ENCODE measurements at regions of chr5 and their contacts with region 1.

Region 1: DNA sequence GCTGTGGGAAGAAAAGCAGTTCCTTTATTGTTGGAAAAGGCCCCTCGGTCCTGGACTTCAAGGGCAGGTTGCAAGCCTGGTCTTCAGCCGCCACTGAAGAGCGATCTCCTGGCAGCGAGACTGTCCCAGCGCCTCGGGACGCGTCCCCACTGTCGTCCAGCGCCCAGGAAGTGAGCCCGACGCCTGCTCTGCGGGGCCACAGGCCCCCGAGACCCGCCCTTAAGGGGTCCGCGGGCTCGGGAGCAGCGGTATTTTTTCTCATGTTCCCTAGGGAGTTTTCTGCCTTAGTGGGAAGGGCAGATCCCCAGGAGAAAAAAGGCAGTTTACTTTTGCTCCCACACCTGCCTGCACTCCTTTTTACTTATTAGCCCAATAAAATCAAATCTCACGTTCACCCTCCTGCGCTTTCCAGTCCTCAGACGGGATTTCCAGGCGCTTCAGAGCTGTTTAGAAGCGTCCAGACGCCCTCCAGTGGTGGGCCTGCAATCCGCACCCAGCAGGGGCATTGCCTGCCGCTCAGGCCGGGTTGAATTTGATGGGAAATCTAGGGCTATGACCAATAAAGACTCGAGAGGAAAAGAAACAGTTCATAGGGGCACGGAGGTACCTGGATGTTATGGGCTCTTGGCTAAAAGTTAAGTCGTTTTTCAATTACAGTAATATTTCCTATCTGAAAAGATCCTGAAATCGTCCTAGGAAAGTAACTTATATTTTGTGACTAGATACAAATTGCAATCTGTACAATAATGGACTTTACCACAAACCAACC is 2.8 kb upstream of the EFNA5 start:
- DNase-seq: peak; percentile 93
- H3K4me3 ChIP-seq: peak overlapping the region; percentile 65
- H3K27ac ChIP-seq: peak overlapping the region; percentile 47
- H3K4me1 ChIP-seq: peaks cover 4% of the 10 kb centered on the region
- H3K27me3 ChIP-seq: no peaks in the 10 kb centered on the region
- CTCF ChIP-seq: peak; percentile 99

Region 2: GRCh38 chr5:106749826-106750225 is 923.7 kb before region 1 on chr5:
- CTCF ChIA-PET with region 1: no interaction called
- POLR2A ChIA-PET with region 1: no interaction called
- intact Hi-C with region 1: loop called (anchors 5 kb)
- DNase-seq: peak; percentile 84
- H3K4me3 ChIP-seq: no peak overlapping the region
- H3K27ac ChIP-seq: peak overlapping the region; percentile 89
- H3K4me1 ChIP-seq: peaks cover 48% of the 10 kb centered on the region
- H3K27me3 ChIP-seq: no peaks in the 10 kb centered on the region
- CTCF ChIP-seq: no peak

Region 3: GRCh38 chr5:107157809-107158208 is 515.7 kb before region 1 on chr5:
- CTCF ChIA-PET with region 1: no interaction called
- POLR2A ChIA-PET with region 1: no interaction called
- intact Hi-C with region 1: no loop called
- DNase-seq: no peak
- H3K4me3 ChIP-seq: no peak overlapping the region
- H3K27ac ChIP-seq: no peak overlapping the region
- H3K4me1 ChIP-seq: no peaks in the 10 kb centered on the region
- H3K27me3 ChIP-seq: no peaks in the 10 kb centered on the region
- CTCF ChIP-seq: no peak

Region 4: DNA sequence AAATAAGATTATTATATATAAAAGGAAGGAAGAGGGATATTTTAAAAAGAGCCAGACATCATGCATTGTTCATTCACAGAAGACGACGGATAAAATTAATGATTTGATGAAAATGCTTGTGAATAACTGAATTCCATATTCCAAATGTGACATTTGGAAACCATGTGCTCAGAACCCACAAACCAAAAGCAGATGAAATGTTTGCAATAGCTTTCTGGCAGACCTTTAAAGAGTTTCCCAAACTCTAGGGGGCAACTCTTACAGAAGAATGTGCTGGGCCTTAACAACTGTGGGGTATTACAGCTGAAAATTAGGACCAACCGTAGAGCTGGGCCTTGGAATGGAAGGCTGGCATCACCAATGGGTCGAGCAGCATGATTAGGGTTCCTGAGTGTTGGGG is 473.8 kb before region 1 on chr5:
- CTCF ChIA-PET with region 1: no interaction called
- POLR2A ChIA-PET with region 1: no interaction called
- intact Hi-C with region 1: loop called (anchors 5 kb)
- DNase-seq: no peak
- H3K4me3 ChIP-seq: no peak overlapping the region
- H3K27ac ChIP-seq: no peak overlapping the region
- H3K4me1 ChIP-seq: peaks cover 32% of the 10 kb centered on the region
- H3K27me3 ChIP-seq: no peaks in the 10 kb centered on the region
- CTCF ChIP-seq: no peak

Region 5: GRCh38 chr5:107340631-107341030 is 332.9 kb before region 1 on chr5:
- CTCF ChIA-PET with region 1: no interaction called
- POLR2A ChIA-PET with region 1: no interaction called
- intact Hi-C with region 1: no loop called
- DNase-seq: no peak
- H3K4me3 ChIP-seq: no peak overlapping the region
- H3K27ac ChIP-seq: no peak overlapping the region
- H3K4me1 ChIP-seq: peaks cover 5% of the 10 kb centered on the region
- H3K27me3 ChIP-seq: peaks cover 9% of the 10 kb centered on the region
- CTCF ChIP-seq: no peak

Region 6: GRCh38 chr5:107365320-107366109 is 308.0 kb before region 1 on chr5:
- CTCF ChIA-PET with region 1: no interaction called
- POLR2A ChIA-PET with region 1: no interaction called
- intact Hi-C with region 1: loop called (anchors 5 kb)
- DNase-seq: peak; percentile 92
- H3K4me3 ChIP-seq: no peak overlapping the region
- H3K27ac ChIP-seq: peak overlapping the region; percentile 31
- H3K4me1 ChIP-seq: peaks cover 44% of the 10 kb centered on the region
- H3K27me3 ChIP-seq: no peaks in the 10 kb centered on the region
- CTCF ChIP-seq: no peak

Region 7: GRCh38 chr5:107501965-107502675 is 171.4 kb before region 1 on chr5:
- CTCF ChIA-PET with region 1: interaction called, 10 read pairs
- POLR2A ChIA-PET with region 1: no interaction called
- intact Hi-C with region 1: loop called (anchors 5 kb)
- DNase-seq: peak; percentile 79
- H3K4me3 ChIP-seq: peak overlapping the region; percentile 30
- H3K27ac ChIP-seq: peak overlapping the region; percentile 13
- H3K4me1 ChIP-seq: peaks cover 26% of the 10 kb centered on the region
- H3K27me3 ChIP-seq: no peaks in the 10 kb centered on the region
- CTCF ChIP-seq: no peak

Region 8: DNA sequence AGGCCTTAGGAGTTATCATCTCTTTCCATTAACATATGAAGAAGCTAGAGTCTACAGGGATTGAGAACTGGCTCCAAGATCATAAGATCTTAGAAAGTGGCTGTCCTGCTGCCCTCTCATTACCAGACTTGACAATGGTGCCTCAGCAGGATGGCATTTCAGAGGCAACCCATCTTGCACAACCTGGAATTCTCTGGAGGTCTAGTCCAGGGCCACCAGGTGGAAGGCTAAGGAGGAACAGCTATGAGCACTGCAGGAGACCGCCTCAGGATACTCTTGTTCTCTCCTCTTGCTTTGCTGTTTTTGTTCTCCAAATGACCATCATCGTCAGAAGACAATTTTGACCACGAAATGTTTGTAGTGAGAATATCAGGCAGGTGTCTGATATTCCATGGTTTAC is 385.8 kb after region 1 on chr5:
- CTCF ChIA-PET with region 1: no interaction called
- POLR2A ChIA-PET with region 1: no interaction called
- intact Hi-C with region 1: no loop called
- DNase-seq: no peak
- H3K4me3 ChIP-seq: no peak overlapping the region
- H3K27ac ChIP-seq: no peak overlapping the region
- H3K4me1 ChIP-seq: peaks cover 16% of the 10 kb centered on the region
- H3K27me3 ChIP-seq: no peaks in the 10 kb centered on the region
- CTCF ChIP-seq: no peak

Region 9: DNA sequence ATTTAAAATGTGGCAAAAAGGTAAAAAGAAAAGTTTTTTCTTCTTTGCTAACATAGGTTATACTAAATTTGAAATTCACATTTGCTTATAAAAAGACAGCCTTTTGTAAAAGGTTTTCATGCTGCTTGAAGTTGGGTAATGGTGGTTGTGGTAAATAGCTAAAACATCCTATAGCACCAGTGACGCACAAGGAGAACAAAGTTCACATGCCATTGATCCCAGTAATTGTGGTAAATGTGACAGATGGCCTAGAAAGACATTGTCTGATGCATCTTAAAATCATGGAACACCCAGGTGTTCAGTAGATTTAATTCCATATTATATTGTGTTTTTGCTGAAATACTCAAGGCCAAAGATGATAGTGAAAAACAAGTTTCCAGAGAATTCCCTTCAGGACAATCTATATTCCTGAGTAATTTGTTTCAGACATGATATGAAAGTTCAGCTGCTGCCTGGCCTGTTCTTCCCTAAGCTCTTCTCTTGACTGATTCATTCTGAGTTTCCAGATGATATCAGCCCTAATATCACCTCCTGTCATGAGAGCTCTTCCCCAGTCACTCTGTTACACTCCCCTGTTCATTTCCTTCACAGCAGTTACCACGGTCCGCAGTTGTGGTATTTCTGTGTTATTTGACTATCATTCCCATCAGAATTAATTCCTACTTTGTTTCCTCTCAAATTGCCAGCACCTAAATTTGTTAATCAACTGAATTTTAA is 713.0 kb after region 1 on chr5:
- CTCF ChIA-PET with region 1: no interaction called
- POLR2A ChIA-PET with region 1: interaction called, 13 read pairs
- intact Hi-C with region 1: no loop called
- DNase-seq: no peak
- H3K4me3 ChIP-seq: no peak overlapping the region
- H3K27ac ChIP-seq: no peak overlapping the region
- H3K4me1 ChIP-seq: no peaks in the 10 kb centered on the region
- H3K27me3 ChIP-seq: no peaks in the 10 kb centered on the region
- CTCF ChIP-seq: no peak